Natural killer cell (primary cell): ENCODE measurements at regions of chr16 and their contacts with region 1.

Region 1: GRCh38 chr16:22297114-22297878 is at the start of gene POLR3E:
- DNase-seq: peak; percentile 99 to 100
- ATAC-seq: peak; percentile 86 to 98 (median 88)
- H3K4me3 ChIP-seq: peak within 1 kb of the TSS; percentile 93
- H3K4me3 Mint-ChIP-seq: peak within 1 kb of the TSS; percentile 95
- H3K27ac ChIP-seq: peak within 1 kb of the TSS; percentile 99
- H3K27ac Mint-ChIP-seq: peak within 1 kb of the TSS; percentile 92 to 98
- H3K4me1 ChIP-seq: peaks cover 33% of the 10 kb centered on the region
- H3K4me1 Mint-ChIP-seq: peaks cover 51 to 53% of the 10 kb centered on the region in 2 donors
- H3K27me3 ChIP-seq: no peaks in the 10 kb centered on the region
- H3K27me3 Mint-ChIP-seq: no peaks in the 10 kb centered on the region
- CTCF ChIP-seq: peak; percentile 90
- total RNA-seq, gene POLR3E: 95.0 to 116 (median 104) TPM

Region 2: DNA sequence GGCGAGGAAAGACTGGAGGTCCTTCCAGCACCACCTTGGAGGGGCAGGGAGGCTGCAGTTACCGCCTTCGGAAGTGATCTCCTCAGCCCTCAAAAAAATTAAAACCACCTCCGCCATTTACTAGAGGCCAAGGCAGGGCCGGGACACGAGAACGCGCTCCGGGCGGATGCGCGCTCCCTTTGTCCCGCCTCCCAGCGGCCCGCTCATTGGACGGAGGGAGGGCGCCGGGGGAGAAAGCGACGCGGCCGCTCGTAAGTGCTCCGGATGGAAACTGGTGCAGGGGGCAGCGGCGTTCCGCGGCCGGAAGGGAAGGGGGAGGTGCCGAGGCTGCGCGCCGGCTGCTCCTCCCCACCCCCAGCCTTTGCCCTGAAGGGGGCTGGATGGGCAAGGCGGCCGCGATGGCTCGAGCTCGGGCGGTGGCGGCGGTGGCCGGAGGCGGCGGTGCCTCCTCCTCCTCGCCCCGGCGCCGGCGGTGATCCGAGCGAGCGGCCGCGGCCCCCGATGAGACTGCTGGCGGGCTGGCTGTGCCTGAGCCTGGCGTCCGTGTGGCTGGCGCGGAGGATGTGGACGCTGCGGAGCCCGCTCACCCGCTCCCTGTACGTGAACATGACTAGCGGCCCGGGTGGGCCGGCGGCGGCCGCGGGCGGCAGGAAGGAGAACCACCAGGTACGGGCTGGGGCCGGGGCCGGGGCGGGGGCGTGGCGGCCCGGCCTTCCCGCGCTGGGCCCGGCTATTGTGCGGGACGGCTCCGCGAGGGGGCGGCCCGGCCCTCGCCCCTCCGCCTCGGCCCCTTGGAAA is 697.9 kb before region 1 on chr16 and contains the start of gene METTL9:
- intact Hi-C with region 1: loop called (anchors 1 kb)
- DNase-seq: peak; percentile 93 to 97
- ATAC-seq: peak; percentile 93 to 99 (median 95)
- H3K4me3 ChIP-seq: peak within 1 kb of the TSS; percentile 71
- H3K4me3 Mint-ChIP-seq: peak within 1 kb of the TSS; percentile 95
- H3K27ac ChIP-seq: peak within 1 kb of the TSS; percentile 93
- H3K27ac Mint-ChIP-seq: peak within 1 kb of the TSS; percentile 90 to 92
- H3K4me1 ChIP-seq: peaks cover 5% of the 10 kb centered on the region
- H3K4me1 Mint-ChIP-seq: peaks cover 35 to 49% of the 10 kb centered on the region in 2 donors
- H3K27me3 ChIP-seq: no peaks in the 10 kb centered on the region
- H3K27me3 Mint-ChIP-seq: no peaks in the 10 kb centered on the region
- CTCF ChIP-seq: no peak
- total RNA-seq, gene METTL9: 73.1 to 110 (median 85.1) TPM

Region 3: GRCh38 chr16:21952793-21953540 is 344.3 kb before region 1 on chr16 and contains the start of gene UQCRC2:
- intact Hi-C with region 1: loop called (anchors 1 kb)
- DNase-seq: peak; percentile 83 to 96
- ATAC-seq: peak; percentile 87 to 95 (median 89)
- H3K4me3 ChIP-seq: peak within 1 kb of the TSS; percentile 81
- H3K4me3 Mint-ChIP-seq: peak within 1 kb of the TSS; percentile 98
- H3K27ac ChIP-seq: peak within 1 kb of the TSS; percentile 90
- H3K27ac Mint-ChIP-seq: peak within 1 kb of the TSS; percentile 99
- H3K4me1 ChIP-seq: peaks cover 27% of the 10 kb centered on the region
- H3K4me1 Mint-ChIP-seq: peaks cover 45 to 55% of the 10 kb centered on the region in 2 donors
- H3K27me3 ChIP-seq: no peaks in the 10 kb centered on the region
- H3K27me3 Mint-ChIP-seq: no peaks in the 10 kb centered on the region
- CTCF ChIP-seq: no peak
- total RNA-seq, gene UQCRC2: 162 to 177 (median 177) TPM

Region 4: GRCh38 chr16:22077700-22078313 is 219.5 kb before region 1 on chr16:
- intact Hi-C with region 1: loop called (anchors 2 kb)
- DNase-seq: peak; percentile 56 to 82
- ATAC-seq: peak; percentile 53 to 78 (median 77)
- H3K4me3 ChIP-seq: no peak overlapping the region
- H3K4me3 Mint-ChIP-seq: no peak overlapping the region
- H3K27ac ChIP-seq: no peak overlapping the region
- H3K27ac Mint-ChIP-seq: no peak overlapping the region
- H3K4me1 ChIP-seq: no peaks in the 10 kb centered on the region
- H3K4me1 Mint-ChIP-seq: no peaks in the 10 kb centered on the region
- H3K27me3 ChIP-seq: no peaks in the 10 kb centered on the region
- H3K27me3 Mint-ChIP-seq: no peaks in the 10 kb centered on the region
- CTCF ChIP-seq: peak; percentile 82

Region 5: DNA sequence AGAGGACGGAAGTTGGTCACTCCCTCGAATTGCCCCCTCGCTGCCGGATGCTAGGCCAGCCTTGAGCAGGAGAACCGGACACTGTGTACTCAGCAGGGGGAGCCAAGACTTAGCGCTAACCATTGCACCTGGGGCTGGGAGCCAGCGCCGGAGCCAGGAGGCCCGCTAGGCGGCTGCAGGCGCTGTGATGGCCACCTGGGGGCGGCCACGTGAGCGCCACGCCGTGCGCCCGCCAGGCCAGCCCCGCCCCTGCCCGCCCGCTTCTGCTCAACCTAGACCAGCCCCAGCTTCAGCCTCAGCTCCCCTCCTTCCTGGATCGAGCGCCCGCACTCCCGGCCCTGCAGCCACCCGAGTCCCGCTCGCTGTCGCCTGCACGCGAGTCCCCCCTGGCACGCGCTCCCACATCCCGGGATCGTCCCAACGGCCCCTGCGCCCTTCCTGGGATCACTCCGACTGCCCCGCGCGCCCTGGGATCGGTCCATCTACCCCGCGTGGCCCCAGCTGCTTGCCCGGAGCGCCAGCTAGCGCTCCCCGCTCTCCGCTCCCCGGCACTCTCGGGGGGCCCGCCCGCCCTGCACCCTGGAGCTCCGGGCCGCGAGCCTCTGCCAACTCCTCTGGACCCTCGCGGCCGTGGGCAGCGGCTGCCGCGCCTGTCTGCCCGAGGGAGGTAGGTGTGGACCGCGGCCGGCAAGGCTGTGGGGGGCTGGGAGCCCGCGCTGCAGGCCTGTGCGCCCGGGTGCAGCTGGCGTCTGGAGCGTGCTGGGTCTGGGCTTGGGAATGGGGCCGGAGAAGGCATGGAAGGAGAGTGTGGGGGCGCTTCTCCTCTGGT is 91.1 kb before region 1 on chr16 and contains the start of gene EEF2K:
- intact Hi-C with region 1: loop called (anchors 1 kb)
- DNase-seq: peak; percentile 63 to 91
- ATAC-seq: peak; percentile 90 to 94 (median 93)
- H3K4me3 ChIP-seq: peak within 1 kb of the TSS; percentile 67
- H3K4me3 Mint-ChIP-seq: peak within 1 kb of the TSS; percentile 95
- H3K27ac ChIP-seq: peak within 1 kb of the TSS; percentile 62
- H3K27ac Mint-ChIP-seq: peak within 1 kb of the TSS; percentile 72 to 81
- H3K4me1 ChIP-seq: peaks cover 16% of the 10 kb centered on the region
- H3K4me1 Mint-ChIP-seq: peaks cover 20% of the 10 kb centered on the region in 2 donors
- H3K27me3 ChIP-seq: no peaks in the 10 kb centered on the region
- H3K27me3 Mint-ChIP-seq: no peaks in the 10 kb centered on the region
- CTCF ChIP-seq: peak; percentile 74
- total RNA-seq, gene EEF2K: 12.6 to 33.5 (median 22.9) TPM